ENCODE measurements at regions of chr6 and their contacts with region 1.

Region 1: DNA sequence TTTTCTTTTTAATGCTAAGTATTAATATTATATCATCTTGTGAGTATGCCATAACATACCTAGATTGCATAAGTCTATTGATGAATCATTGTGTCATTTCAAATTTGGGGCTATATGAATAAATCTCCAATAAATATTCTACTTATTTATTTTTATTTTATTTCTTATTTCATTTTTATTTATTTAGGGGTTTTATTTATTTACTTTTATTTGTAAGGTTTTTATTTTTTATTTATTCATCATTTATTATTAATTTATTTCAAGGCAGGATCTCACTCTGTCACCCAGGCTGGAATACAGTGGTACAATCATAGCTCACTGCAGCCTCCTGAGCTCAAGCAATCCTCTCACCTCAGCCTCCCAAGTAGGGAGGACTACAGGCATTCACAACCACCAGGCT is 36.3 kb downstream of the BMP5 start:
- DNase-seq: no peak
- ATAC-seq: no peak
- H3K4me3 ChIP-seq: no peak overlapping the region
- H3K27ac ChIP-seq: no peak overlapping the region
- H3K4me1 ChIP-seq: no peaks in the 10 kb centered on the region
- H3K27me3 ChIP-seq: no peaks in the 10 kb centered on the region
- CTCF ChIP-seq: no peak
- POLR2A ChIP-seq: no peak

Region 2: DNA sequence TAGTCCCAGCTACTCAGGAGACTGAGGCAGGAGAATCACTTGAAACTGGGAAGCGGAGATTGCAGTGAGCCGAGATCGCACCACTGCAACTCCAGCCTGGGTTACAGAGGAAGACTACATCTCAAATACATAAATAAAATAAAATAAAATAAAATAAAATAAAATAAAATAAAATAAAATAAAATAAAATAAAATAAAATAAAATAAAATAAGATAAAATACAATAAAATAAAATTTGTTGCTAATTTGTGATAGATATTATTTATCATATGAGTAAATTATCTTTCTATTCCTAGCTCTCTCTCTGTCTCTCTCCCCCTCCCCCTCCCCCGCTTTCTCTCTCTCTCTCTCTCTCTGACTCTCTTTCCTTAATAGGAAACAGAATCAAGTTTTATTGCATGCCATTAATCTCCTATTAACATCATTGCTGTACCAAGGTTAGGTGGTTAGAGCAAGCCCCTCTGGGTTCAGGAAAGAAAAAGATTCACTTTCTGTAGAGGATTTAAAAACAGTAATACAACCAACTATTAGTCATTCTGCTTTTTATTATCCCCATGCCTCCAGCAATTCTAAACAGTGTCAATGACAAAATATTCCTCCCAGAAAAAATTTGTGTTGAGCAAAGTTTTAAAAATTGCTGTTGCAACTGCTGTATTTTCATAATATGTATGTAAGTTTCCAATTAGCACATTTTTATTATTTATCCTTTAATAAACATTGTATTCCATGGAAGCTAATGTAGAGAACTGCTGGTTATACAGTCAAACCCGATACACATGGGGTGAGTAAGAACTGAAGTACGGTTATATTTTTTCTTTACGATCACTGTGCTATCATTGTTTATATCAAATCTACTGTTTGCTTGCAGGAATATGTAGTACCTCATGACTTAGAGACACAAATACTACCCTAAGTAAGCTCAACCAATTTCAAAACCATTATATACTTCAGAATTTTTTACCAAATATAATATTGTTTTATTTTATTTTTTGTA is 14.2 kb after region 1 on chr6:
- intact Hi-C with region 1: loop called in 1 of 10 experiments (anchors 2 kb)
- DNase-seq: no peak
- ATAC-seq: no peak
- H3K4me3 ChIP-seq: no peak overlapping the region
- H3K27ac ChIP-seq: no peak overlapping the region
- H3K4me1 ChIP-seq: no peaks in the 10 kb centered on the region
- H3K27me3 ChIP-seq: no peaks in the 10 kb centered on the region
- CTCF ChIP-seq: no peak
- POLR2A ChIP-seq: no peak

Region 3: GRCh38 chr6:55902796-55903195 is 63.7 kb after region 1 on chr6:
- intact Hi-C with region 1: no loop called
- DNase-seq: no peak
- ATAC-seq: no peak
- H3K4me3 ChIP-seq: no peak overlapping the region
- H3K27ac ChIP-seq: no peak overlapping the region
- H3K4me1 ChIP-seq: no peaks in the 10 kb centered on the region
- H3K27me3 ChIP-seq: no peaks in the 10 kb centered on the region
- CTCF ChIP-seq: no peak
- POLR2A ChIP-seq: no peak